ENCODE measurements at regions of chr2 and their contacts with region 1.

Region 1: DNA sequence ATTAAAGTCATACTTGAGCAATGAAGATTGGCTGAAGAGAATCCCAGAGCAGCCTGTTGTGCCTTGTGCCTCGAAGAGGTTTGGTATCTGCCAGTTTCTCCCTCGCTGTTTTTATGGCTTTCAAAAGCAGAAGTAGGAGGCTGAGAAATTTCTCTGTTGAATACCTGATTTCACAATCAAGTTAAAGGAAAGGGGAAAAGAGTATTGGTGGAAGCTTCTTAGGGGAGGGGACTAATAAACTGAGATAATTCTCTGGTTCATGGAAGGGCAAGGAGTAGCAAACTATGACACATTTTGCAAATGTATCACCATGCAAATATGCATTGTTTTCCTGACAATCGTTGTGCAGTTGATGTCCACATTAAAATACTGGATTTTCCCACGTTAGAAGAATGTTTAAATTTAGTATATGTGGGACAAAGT is at the start of gene IL1B:
- DNase-seq: no peak
- ATAC-seq: peak; percentile 14
- H3K4me3 Mint-ChIP-seq: no peak within 1 kb of the TSS
- H3K27ac Mint-ChIP-seq: peak within 1 kb of the TSS; percentile 10
- H3K4me1 Mint-ChIP-seq: peaks cover 55% of the 10 kb centered on the region
- H3K27me3 Mint-ChIP-seq: no peaks in the 10 kb centered on the region
- CTCF ChIP-seq: no peak
- total RNA-seq, gene IL1B: 0.53 and 0.71 TPM in 2 replicates

Region 2: DNA sequence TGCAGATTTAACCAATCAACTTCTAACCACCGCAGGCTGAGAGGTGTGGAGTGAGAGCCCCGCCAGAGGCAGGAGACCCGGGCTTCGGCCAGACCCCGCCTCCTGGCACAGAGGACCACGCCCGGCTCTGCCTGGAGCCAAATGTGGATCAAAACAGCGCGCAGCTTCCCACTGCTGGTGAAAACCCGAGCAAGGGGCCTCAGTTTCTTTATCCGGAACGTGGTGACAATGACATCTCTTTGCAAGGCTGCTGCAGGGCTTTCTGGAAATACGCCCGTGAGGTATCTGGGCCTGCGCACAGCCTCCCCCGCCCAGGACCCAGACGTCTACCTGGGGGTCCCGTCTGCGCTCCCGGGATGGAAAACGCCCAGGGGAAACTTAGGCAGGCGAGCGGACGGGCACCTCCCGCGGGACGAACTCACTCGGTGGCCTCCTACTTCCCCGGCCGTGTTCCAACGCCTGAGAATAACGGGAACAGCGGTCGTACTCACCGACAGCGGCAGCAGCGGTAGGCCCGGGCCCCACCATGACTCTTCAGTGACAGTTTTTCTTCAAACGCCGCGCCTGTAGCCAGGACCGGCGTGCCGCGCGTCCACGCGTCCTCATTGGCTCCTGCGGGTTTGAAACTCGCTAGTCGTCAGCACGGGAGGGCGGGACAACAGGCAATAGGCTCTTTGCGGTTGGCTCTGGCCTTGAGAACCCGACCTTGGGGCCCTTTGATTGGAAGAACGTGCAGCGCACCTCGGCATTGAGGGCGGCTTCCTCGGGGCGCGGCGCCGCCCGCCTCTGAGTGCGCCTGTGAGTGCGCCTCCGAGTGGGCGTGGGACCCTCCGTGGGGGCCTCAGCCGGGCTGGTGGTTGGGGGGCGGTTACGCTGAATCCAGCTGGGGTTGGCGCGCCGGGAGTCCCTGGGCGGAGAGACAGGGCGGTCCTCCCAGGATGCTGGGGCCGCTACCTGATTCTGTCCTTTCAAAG is 72.3 kb before region 1 on chr2 and contains the start of gene CKAP2L:
- CTCF ChIA-PET with region 1: no interaction called
- POLR2A ChIA-PET with region 1: no interaction called
- intact Hi-C with region 1: loop called (anchors 2 kb)
- DNase-seq: peak; percentile 87
- ATAC-seq: peak; percentile 100
- H3K4me3 Mint-ChIP-seq: peak within 1 kb of the TSS; percentile 91
- H3K27ac Mint-ChIP-seq: peak within 1 kb of the TSS; percentile 50
- H3K4me1 Mint-ChIP-seq: peaks cover 31% of the 10 kb centered on the region
- H3K27me3 Mint-ChIP-seq: no peaks in the 10 kb centered on the region
- CTCF ChIP-seq: no peak
- total RNA-seq, gene CKAP2L: 1.2 TPM in 2 replicates

Region 3: DNA sequence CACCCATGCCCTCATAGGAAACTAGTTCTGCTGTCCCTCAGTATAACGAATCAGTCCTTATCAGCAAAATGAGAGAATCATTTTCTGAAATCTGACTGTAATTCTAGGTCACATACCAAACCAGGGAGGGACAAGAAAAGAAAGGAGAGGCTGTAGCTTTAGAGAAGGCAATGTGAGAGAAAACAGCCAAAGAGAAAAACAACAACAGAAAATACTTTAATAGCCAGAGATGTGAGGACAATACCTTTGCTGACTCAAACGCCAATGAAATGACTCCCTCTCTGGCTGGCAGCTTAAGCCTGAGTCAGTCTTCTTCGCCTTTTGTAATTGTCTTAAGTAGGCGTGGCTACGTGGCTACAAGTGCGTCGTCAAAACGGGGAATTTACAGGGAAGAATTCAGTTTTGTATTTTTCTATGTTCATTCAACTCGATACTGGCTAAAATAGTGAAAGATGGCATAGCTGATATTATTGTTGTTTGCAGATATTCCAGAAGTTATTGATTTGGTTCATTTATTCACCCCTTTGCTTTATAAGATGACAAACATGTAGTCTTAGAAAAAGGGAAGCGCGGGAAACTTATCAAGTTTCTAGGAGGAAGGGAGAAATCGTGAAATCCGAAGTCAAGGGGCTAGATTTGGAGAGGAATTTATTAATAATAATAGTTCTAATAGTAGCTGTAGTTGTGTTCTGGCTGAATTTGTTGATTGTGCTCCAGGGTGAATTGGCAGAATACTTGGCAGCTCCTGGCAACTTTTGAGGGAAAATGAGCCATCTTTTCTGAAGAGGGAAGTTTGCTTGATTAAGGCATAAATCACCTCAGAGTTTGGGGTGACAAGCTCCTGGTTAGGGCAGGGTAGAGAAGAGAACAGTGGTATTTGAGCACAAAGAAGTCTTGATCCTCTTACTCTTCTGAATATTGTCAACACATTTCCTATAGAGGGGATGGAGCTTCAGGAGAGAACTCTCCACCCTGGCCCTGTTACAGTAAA is 52.2 kb before region 1 on chr2 and contains the start of gene IL1A:
- CTCF ChIA-PET with region 1: no interaction called
- POLR2A ChIA-PET with region 1: interaction called, 6 read pairs
- intact Hi-C with region 1: loop called (anchors 5 kb)
- DNase-seq: no peak
- ATAC-seq: peak; percentile 32
- H3K4me3 Mint-ChIP-seq: peak within 1 kb of the TSS; percentile 73
- H3K27ac Mint-ChIP-seq: peak within 1 kb of the TSS; percentile 88
- H3K4me1 Mint-ChIP-seq: peaks cover 39% of the 10 kb centered on the region
- H3K27me3 Mint-ChIP-seq: no peaks in the 10 kb centered on the region
- CTCF ChIP-seq: no peak
- total RNA-seq, gene IL1A: 1.4 and 1.9 TPM in 2 replicates

Region 4: DNA sequence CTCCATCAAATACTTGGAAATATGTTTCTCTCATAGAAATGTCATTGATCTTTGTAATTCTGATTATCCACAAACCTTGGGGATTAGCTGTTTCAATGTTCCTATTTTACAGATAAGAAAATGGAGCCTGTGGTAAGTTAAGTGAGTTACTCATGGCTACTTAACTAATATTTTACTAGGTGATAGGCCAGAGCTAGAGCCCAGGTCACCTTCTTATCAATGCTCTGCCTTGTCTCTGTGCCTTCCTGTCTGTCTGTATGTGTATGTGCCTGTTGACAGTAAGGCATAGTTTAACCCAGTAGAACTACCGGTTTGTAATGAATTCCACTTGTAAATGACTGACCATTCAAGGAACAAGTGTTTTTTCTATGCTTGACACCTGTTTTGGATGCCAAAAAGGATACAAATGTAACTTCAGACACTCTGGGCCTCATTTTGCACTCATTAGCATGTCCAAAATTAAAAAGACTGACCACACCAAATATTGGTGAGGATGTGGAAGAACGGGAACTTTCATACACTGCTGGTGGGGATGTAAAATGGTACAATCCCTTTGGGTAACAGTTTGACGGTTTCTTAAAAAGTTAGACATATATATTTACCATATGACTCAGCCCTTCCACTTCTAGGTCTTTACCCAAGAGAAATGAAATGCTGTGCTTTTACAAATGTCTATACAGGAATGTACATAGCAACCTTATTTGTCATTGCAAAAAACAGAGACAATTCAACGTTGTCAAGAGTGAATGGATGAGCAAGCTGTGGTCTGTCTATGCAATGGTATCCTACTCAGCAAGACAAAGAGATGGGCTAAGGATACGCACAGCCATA is 32.8 kb before region 1 on chr2:
- CTCF ChIA-PET with region 1: no interaction called
- POLR2A ChIA-PET with region 1: interaction called, 4 read pairs
- intact Hi-C with region 1: loop called (anchors 5 kb)
- DNase-seq: no peak
- ATAC-seq: no peak
- H3K4me3 Mint-ChIP-seq: no peak overlapping the region
- H3K27ac Mint-ChIP-seq: no peak overlapping the region
- H3K4me1 Mint-ChIP-seq: peaks cover 14% of the 10 kb centered on the region
- H3K27me3 Mint-ChIP-seq: no peaks in the 10 kb centered on the region
- CTCF ChIP-seq: no peak

Region 5: GRCh38 chr2:112869258-112869885 is 32.7 kb after region 1 on chr2:
- CTCF ChIA-PET with region 1: no interaction called
- POLR2A ChIA-PET with region 1: no interaction called
- intact Hi-C with region 1: no loop called
- DNase-seq: no peak
- ATAC-seq: no peak
- H3K4me3 Mint-ChIP-seq: no peak overlapping the region
- H3K27ac Mint-ChIP-seq: no peak overlapping the region
- H3K4me1 Mint-ChIP-seq: no peaks in the 10 kb centered on the region
- H3K27me3 Mint-ChIP-seq: peaks cover 15% of the 10 kb centered on the region
- CTCF ChIP-seq: no peak

Region 6: DNA sequence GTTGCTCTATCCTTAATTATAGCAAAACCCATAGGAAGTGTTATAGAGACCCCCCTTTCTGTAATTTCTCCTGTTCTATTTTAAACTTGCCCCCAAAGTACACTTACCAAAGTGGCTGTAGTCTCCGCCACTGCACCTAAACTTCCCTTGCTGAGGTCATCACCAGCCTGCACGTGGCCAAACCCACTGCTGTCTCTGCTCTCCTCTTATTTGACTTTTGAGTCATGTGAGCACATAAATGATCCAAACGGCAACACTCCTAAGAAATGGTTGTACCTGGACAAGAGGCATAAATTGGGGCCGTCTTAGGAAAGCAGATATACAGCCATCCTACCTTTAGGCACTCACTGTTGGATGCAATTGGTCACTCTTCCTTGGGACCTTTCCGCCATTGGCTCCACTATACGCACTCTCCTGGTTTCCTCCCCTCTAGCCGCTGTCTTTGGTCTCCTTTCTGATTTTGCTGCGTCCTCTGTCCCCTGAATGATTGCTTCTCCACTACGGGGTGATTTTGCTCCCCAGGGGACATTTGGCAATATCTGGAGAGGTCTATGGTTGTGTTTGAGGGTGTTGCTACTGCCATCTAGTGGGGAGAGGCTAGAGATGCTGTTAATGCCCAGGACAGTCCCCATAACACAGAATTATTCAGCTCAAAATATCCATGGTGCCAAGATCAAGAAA is 121.9 kb after region 1 on chr2:
- CTCF ChIA-PET with region 1: no interaction called
- POLR2A ChIA-PET with region 1: no interaction called
- intact Hi-C with region 1: no loop called
- DNase-seq: no peak
- ATAC-seq: peak; percentile 82
- H3K4me3 Mint-ChIP-seq: no peak overlapping the region
- H3K27ac Mint-ChIP-seq: no peak overlapping the region
- H3K4me1 Mint-ChIP-seq: no peaks in the 10 kb centered on the region
- H3K27me3 Mint-ChIP-seq: no peaks in the 10 kb centered on the region
- CTCF ChIP-seq: no peak

Region 7: DNA sequence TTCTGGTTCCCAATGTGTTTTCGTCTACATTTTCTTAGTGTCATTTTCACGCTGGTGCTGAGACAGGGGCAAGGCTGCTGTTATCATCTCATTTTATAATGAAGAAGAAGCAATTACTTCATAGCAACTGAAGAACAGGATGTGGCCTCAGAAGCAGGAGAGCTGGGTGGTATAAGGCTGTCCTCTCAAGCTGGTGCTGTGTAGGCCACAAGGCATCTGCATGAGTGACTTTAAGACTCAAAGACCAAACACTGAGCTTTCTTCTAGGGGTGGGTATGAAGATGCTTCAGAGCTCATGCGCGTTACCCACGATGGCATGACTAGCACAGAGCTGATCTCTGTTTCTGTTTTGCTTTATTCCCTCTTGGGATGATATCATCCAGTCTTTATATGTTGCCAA is 148.4 kb after region 1 on chr2:
- CTCF ChIA-PET with region 1: no interaction called
- POLR2A ChIA-PET with region 1: no interaction called
- intact Hi-C with region 1: no loop called
- DNase-seq: no peak
- ATAC-seq: no peak
- H3K4me3 Mint-ChIP-seq: no peak overlapping the region
- H3K27ac Mint-ChIP-seq: no peak overlapping the region
- H3K4me1 Mint-ChIP-seq: peaks cover 3% of the 10 kb centered on the region
- H3K27me3 Mint-ChIP-seq: peaks cover 4% of the 10 kb centered on the region
- CTCF ChIP-seq: no peak